ENCODE measurements at regions of chr1 and their contacts with region 1.

Region 1: DNA sequence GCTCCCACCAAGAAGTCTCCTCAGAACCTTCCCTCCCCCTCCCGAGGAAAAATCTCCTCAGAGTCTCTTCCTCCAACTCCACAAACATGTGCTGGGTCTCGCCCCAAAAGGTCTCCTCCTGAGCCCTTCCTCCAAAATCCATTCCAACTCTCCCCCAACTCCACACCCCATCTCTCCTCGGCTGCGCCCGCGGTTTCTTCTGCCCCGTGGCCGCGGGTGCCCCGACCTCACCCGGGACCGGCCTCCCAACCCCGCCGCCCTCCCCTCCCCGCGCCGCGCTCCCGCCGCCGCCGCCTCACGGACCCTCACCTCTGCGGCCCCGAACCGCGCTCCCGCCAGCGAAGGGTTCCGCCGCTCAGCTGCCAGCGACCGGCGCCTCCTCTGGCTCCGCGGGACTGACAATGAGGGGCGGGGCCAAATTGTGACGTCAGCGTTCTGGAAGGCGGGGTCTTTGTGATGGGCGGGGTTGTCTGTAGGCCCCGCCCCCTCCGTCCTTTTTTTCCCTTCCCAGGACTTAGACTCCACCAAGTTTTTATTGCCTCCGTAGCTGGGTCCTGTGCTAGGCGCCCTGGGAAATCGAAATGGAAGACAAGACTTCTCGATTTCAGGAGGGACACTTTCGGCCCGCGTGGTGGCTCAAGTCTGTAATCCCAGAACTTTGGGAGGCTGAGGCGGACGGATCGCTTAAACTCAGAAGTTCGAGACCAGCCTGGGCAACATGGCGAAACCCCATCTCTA is at the start of gene LUZP1:
- DNase-seq: no peak
- ATAC-seq: peak; percentile 81
- H3K4me3 ChIP-seq: peak within 1 kb of the TSS; percentile 74 to 96
- H3K27ac ChIP-seq: peak within 1 kb of the TSS; percentile 77
- H3K4me1 ChIP-seq: peaks cover 23% of the 10 kb centered on the region; the same call in 1 of the 2 replicates
- H3K27me3 ChIP-seq: no peaks in the 10 kb centered on the region
- CTCF ChIP-seq: no peak
- total RNA-seq, gene LUZP1: 40.2 TPM

Region 2: DNA sequence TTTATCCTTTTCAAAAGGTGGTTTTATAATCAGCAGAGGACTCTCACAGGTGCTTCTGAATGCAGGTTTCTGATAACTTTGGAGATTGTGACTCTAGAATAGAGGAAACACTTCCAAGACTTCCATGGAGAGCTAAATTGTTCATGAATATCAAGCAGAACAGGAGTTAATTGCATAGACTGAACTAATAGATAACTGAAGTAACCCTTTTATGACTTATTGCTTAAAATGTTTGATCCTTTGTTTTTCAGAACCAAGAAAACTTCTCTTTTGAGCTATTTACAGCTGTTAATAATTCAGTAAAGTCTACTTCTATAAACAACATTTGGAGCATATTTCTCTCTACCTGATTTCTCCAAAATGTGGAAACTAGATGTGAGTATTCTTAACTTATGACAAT is 172.9 kb before region 1 on chr1:
- CTCF ChIA-PET with region 1: interaction called, 10 read pairs
- POLR2A ChIA-PET with region 1: no interaction called
- in situ Hi-C with region 1: no loop called
- intact Hi-C with region 1: no loop called
- DNase-seq: no peak
- ATAC-seq: no peak
- H3K4me3 ChIP-seq: no peak overlapping the region
- H3K27ac ChIP-seq: no peak overlapping the region
- H3K4me1 ChIP-seq: no peaks in the 10 kb centered on the region
- H3K27me3 ChIP-seq: no peaks in the 10 kb centered on the region
- CTCF ChIP-seq: no peak

Region 3: DNA sequence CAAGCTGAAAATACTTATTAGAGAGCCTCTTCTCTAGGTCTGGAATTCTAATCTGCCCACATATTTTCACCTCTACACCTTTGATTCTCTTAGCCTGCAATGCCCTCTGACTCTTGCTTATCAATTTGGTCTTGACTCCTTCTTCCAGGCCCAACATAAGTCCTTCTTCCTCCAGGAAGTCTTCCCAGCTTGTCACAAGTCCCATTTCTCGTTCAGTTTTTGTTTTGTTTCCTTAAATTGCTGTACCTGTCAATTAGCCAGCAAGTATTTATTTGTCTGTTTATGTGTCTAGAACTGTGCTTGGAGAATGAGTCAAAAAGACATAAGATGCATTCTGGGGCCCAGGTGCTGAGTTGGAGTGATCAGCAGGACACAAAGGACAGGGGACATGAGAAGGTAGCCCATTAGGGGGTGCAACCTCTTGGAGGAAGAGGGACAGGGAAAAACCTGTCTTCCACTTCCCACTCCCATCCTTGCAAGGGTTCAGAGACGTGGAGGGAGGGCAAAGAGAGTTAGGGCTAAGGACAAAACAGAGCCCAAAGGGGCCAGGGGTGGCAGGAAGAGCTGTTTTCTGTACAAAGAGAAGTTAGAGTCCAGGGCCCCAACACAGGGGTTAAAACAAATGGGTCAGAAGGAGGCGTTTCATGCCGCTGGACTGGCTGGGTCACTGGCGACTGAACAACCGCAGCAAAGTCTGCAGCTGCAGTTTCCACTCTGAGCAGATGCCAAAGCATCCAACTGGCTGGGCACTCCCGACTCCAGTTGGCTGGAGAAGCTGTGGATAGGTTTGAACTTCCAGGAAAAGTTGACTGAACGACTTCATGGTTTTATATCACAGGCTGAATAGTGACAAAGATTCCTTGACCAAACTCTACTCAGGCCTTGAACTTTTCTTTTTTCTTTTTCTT is 755.2 kb after region 1 on chr1:
- CTCF ChIA-PET with region 1: interaction called, 13 read pairs
- POLR2A ChIA-PET with region 1: no interaction called
- in situ Hi-C with region 1: no loop called
- intact Hi-C with region 1: no loop called
- DNase-seq: no peak
- ATAC-seq: no peak
- H3K4me3 ChIP-seq: no peak overlapping the region
- H3K27ac ChIP-seq: no peak overlapping the region
- H3K4me1 ChIP-seq: no peaks in the 10 kb centered on the region
- H3K27me3 ChIP-seq: no peaks in the 10 kb centered on the region
- CTCF ChIP-seq: no peak

Measured in Panc1 (cell line).